A549 (cell line): ENCODE measurements at regions of chr5 and their contacts with region 1.

Region 1: GRCh38 chr5:114449860-114450421 is 88.1 kb downstream of the KCNN2 start:
- DNase-seq: peak; percentile 45 to 57
- ATAC-seq: peak; percentile 99 to 100
- H3K4me3 ChIP-seq: no peak overlapping the region
- H3K27ac ChIP-seq: no peak overlapping the region
- H3K4me1 ChIP-seq: no peaks in the 10 kb centered on the region
- CTCF ChIP-seq: peak; percentile 78
- EP300 ChIP-seq: no peak
- POLR2A ChIP-seq: no peak
- RAD21 ChIP-seq: peak; percentile 83 to 87

Region 2: DNA sequence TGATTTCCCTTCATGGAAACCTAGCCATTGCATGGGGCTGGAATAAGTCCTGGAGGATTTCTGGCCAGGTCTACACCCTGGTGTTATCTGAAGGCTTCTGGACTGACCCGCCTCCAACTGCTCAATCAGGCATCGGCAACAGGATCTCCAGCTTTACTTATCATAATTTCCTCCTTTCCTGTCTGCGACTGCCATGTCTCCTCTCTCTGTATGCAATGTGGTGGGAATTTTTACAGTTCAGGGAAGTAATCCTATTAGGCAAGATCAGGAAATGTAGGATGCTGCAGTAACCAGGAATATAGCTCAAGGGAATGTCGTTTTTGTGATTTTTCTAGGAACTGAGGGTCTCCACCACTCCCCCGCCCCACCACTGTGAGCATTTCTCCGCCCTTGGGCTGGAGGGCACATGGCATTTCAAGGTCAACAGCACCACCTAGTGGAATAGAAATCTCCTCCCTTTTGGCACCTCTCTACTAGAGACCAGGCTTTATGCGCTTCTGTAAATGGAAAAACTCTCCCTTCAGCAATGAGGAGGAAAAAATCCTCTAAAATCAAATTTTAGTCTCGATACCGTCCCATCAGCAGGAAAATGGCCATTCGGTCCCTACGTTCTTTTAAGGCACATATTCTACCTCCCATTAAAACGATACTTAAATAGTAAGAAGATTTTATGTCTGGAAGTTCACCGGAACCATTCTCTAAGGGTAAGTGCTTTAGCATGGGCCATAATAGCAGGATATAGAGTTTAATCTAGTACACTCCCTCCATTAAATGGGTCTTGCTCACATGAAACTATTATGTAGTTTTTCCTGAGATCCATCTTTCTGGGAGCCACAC is 843.4 kb before region 1 on chr5:
- CTCF ChIA-PET with region 1: interaction called, 36 read pairs
- POLR2A ChIA-PET with region 1: no interaction called
- DNase-seq: peak; percentile 19 to 48
- ATAC-seq: peak; percentile 92 to 99
- H3K4me3 ChIP-seq: no peak overlapping the region; the same call in 2 of the 3 replicates
- H3K27ac ChIP-seq: no peak overlapping the region
- H3K4me1 ChIP-seq: no peaks in the 10 kb centered on the region
- CTCF ChIP-seq: peak; percentile 81
- EP300 ChIP-seq: no peak
- POLR2A ChIP-seq: no peak
- RAD21 ChIP-seq: peak; percentile 88 to 92

Region 3: DNA sequence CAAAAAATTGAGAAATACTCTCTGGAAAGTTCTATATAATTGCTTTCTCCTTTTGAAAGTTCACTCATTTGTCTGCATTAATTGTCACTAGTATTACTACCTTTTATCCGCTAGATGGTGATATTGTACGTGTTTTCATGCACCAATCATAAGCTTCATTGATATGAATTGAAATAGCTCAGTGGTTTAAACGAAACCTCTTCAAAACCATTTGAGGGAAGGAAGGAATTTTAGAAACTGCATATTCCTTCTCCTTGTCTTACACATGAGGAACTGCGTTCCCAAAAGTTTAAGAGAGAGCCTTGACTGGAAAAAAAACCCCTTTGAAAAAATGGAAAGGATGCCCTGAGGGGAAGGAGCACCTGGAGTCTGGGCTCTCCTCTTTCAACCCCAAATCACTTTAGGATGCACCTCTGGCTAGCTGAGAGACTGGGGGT is 837.9 kb before region 1 on chr5:
- CTCF ChIA-PET with region 1: interaction called, 36 read pairs
- POLR2A ChIA-PET with region 1: no interaction called
- DNase-seq: peak; percentile 35 to 41
- ATAC-seq: peak; percentile 62 to 88; a peak in 5 of 6 replicates
- H3K4me3 ChIP-seq: no peak overlapping the region
- H3K27ac ChIP-seq: no peak overlapping the region
- H3K4me1 ChIP-seq: no peaks in the 10 kb centered on the region
- CTCF ChIP-seq: peak; percentile 80
- EP300 ChIP-seq: no peak
- POLR2A ChIP-seq: no peak
- RAD21 ChIP-seq: peak; percentile 77 to 81

Region 4: DNA sequence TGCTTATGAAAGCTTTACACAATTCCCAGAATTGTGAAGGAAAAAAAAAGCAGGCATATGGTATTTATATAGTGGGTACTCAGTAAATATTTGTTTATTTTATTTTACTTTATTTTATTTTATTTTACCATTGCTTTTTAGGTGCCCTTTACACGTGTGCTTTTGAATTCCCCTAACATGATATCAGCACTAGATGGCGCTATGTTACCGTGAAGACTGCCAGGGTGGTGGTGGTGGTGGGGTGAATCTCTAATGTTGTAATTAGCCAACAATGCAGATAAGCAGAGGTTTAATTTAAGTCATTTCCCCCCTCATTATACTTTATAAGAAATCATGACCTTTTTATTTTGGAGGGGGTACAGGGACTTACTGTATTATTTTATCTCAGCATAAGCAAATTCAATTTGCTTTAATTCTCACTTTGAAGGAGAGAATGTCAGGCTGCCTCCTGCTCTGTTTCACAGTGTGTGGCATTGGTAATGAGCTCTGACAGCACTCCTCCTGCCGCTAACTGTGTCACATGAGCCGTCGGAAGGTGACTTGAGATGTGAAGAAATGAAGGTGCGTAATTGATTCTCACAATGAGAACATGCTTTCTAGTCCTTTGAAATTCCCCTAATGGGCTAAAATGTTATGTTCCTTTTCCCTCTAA is 770.9 kb before region 1 on chr5:
- CTCF ChIA-PET with region 1: interaction called, 49 read pairs
- POLR2A ChIA-PET with region 1: no interaction called
- DNase-seq: peak; percentile 41 to 43
- ATAC-seq: peak; percentile 88
- H3K4me3 ChIP-seq: no peak overlapping the region
- H3K27ac ChIP-seq: no peak overlapping the region
- H3K4me1 ChIP-seq: no peaks in the 10 kb centered on the region
- CTCF ChIP-seq: peak; percentile 74
- EP300 ChIP-seq: no peak
- POLR2A ChIP-seq: no peak
- RAD21 ChIP-seq: peak; percentile 79 to 85

Region 5: GRCh38 chr5:114402206-114402605 is 47.7 kb before region 1 on chr5:
- CTCF ChIA-PET with region 1: no interaction called
- POLR2A ChIA-PET with region 1: no interaction called
- DNase-seq: no peak
- ATAC-seq: no peak
- H3K4me3 ChIP-seq: no peak overlapping the region
- H3K27ac ChIP-seq: no peak overlapping the region
- H3K4me1 ChIP-seq: no peaks in the 10 kb centered on the region
- CTCF ChIP-seq: no peak
- EP300 ChIP-seq: no peak
- POLR2A ChIP-seq: no peak
- RAD21 ChIP-seq: no peak

Region 6: GRCh38 chr5:114435885-114436299 is 14.0 kb before region 1 on chr5:
- CTCF ChIA-PET with region 1: interaction called, 21 read pairs
- POLR2A ChIA-PET with region 1: no interaction called
- DNase-seq: no peak
- ATAC-seq: no peak
- H3K4me3 ChIP-seq: no peak overlapping the region
- H3K27ac ChIP-seq: no peak overlapping the region
- H3K4me1 ChIP-seq: no peaks in the 10 kb centered on the region
- CTCF ChIP-seq: no peak
- EP300 ChIP-seq: no peak
- POLR2A ChIP-seq: no peak
- RAD21 ChIP-seq: no peak

Region 7: GRCh38 chr5:114467729-114468128 is 17.8 kb after region 1 on chr5:
- CTCF ChIA-PET with region 1: interaction called, 21 read pairs
- POLR2A ChIA-PET with region 1: no interaction called
- DNase-seq: no peak
- ATAC-seq: no peak
- H3K4me3 ChIP-seq: no peak overlapping the region
- H3K27ac ChIP-seq: no peak overlapping the region
- H3K4me1 ChIP-seq: no peaks in the 10 kb centered on the region
- CTCF ChIP-seq: no peak
- EP300 ChIP-seq: no peak
- POLR2A ChIP-seq: no peak
- RAD21 ChIP-seq: no peak

Region 8: DNA sequence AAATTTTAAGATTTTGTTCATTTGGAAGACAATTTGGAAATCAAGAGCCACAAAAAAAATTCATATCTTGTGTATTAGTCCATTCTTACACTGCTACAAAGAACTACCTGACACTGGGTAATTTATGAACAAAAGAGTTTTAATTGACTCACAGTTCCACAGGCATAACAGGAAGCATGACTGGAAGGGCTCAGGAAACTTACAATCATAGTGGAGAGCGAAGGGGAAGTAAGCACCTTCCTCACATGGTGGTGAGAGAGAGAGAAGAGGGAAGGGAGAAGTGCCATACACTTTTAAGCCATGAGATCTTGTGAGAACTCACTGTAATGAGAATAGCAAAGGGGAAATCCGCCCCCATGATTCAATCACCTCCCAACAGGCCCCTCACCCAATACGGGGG is 186.3 kb after region 1 on chr5:
- CTCF ChIA-PET with region 1: no interaction called
- POLR2A ChIA-PET with region 1: no interaction called
- DNase-seq: no peak
- ATAC-seq: no peak
- H3K4me3 ChIP-seq: no peak overlapping the region
- H3K27ac ChIP-seq: no peak overlapping the region
- H3K4me1 ChIP-seq: no peaks in the 10 kb centered on the region
- CTCF ChIP-seq: no peak
- EP300 ChIP-seq: no peak
- POLR2A ChIP-seq: no peak
- RAD21 ChIP-seq: no peak